CD4-positive, alpha-beta memory T cell (primary cell): ENCODE measurements at regions of chr14 and their contacts with region 1.

Region 1: GRCh38 chr14:49971156-49972130 is 78.6 kb downstream of the ARF6 start:
- DNase-seq: peak; percentile 75 to 85 (median 82)
- H3K4me3 ChIP-seq: peak overlapping the region; percentile 36 to 44
- H3K4me3 Mint-ChIP-seq: peak overlapping the region; percentile 77 to 89 (median 82)
- H3K27ac ChIP-seq: peak overlapping the region; percentile 73
- H3K27ac Mint-ChIP-seq: peak overlapping the region; percentile 87 to 98 (median 96)
- H3K4me1 ChIP-seq: peaks cover 69% of the 10 kb centered on the region
- H3K4me1 Mint-ChIP-seq: peaks cover 44 to 76% (median 62%) of the 10 kb centered on the region in 4 donors
- H3K27me3 ChIP-seq: no peaks in the 10 kb centered on the region
- H3K27me3 Mint-ChIP-seq: no peaks in the 10 kb centered on the region

Region 2: GRCh38 chr14:49339130-49339529 is 632.3 kb before region 1 on chr14:
- CTCF ChIA-PET with region 1: no interaction called
- POLR2A ChIA-PET with region 1: no interaction called
- intact Hi-C with region 1: no loop called
- DNase-seq: no peak
- H3K4me3 ChIP-seq: no peak overlapping the region
- H3K4me3 Mint-ChIP-seq: no peak overlapping the region
- H3K27ac ChIP-seq: no peak overlapping the region
- H3K27ac Mint-ChIP-seq: peak overlapping the region in 1 of 7 donors; percentile 58
- H3K4me1 ChIP-seq: no peaks in the 10 kb centered on the region
- H3K4me1 Mint-ChIP-seq: no peaks in the 10 kb centered on the region
- H3K27me3 ChIP-seq: no peaks in the 10 kb centered on the region
- H3K27me3 Mint-ChIP-seq: peaks cover 8 to 12% of the 10 kb centered on the region in 2 donors

Region 3: GRCh38 chr14:49867831-49868723 is 103.4 kb before region 1 on chr14:
- CTCF ChIA-PET with region 1: interaction called, 72 read pairs
- POLR2A ChIA-PET with region 1: interaction called, 81 read pairs
- intact Hi-C with region 1: loop called (anchors 1 kb)
- DNase-seq: peak; percentile 92 to 98 (median 96)
- H3K4me3 ChIP-seq: peak overlapping the region; percentile 47 to 54
- H3K4me3 Mint-ChIP-seq: peak overlapping the region; percentile 88 to 96 (median 92)
- H3K27ac ChIP-seq: peak overlapping the region; percentile 92
- H3K27ac Mint-ChIP-seq: peak overlapping the region; percentile 88 to 99 (median 98)
- H3K4me1 ChIP-seq: peaks cover 45% of the 10 kb centered on the region
- H3K4me1 Mint-ChIP-seq: peaks cover 12 to 21% (median 14%) of the 10 kb centered on the region in 4 donors
- H3K27me3 ChIP-seq: no peaks in the 10 kb centered on the region
- H3K27me3 Mint-ChIP-seq: no peaks in the 10 kb centered on the region

Region 4: GRCh38 chr14:49897968-49898367 is 73.5 kb before region 1 on chr14:
- CTCF ChIA-PET with region 1: interaction called, 8 read pairs
- POLR2A ChIA-PET with region 1: interaction called, 84 read pairs
- intact Hi-C with region 1: loop called (anchors 1 kb)
- DNase-seq: no peak
- H3K4me3 ChIP-seq: peak overlapping the region; percentile 33 to 58
- H3K4me3 Mint-ChIP-seq: peak overlapping the region; percentile 65 to 99 (median 84)
- H3K27ac ChIP-seq: peak overlapping the region; percentile 98
- H3K27ac Mint-ChIP-seq: peak overlapping the region; percentile 85 to 97 (median 94)
- H3K4me1 ChIP-seq: peaks cover 42% of the 10 kb centered on the region
- H3K4me1 Mint-ChIP-seq: peaks cover 21 to 62% (median 36%) of the 10 kb centered on the region in 4 donors
- H3K27me3 ChIP-seq: no peaks in the 10 kb centered on the region
- H3K27me3 Mint-ChIP-seq: no peaks in the 10 kb centered on the region

Region 5: GRCh38 chr14:49946320-49947141 is 24.9 kb before region 1 on chr14:
- CTCF ChIA-PET with region 1: interaction called, 44 read pairs
- POLR2A ChIA-PET with region 1: interaction called, 195 read pairs
- intact Hi-C with region 1: loop called (anchors 1 kb)
- DNase-seq: peak; percentile 40 to 67 (median 41)
- H3K4me3 ChIP-seq: peak overlapping the region in 1 of 2 donors; percentile 11
- H3K4me3 Mint-ChIP-seq: peak overlapping the region; percentile 1 to 78 (median 67)
- H3K27ac ChIP-seq: peak overlapping the region; percentile 64
- H3K27ac Mint-ChIP-seq: peak overlapping the region; percentile 90 to 97 (median 94)
- H3K4me1 ChIP-seq: peaks cover 69% of the 10 kb centered on the region
- H3K4me1 Mint-ChIP-seq: peaks cover 59 to 91% (median 72%) of the 10 kb centered on the region in 4 donors
- H3K27me3 ChIP-seq: no peaks in the 10 kb centered on the region
- H3K27me3 Mint-ChIP-seq: no peaks in the 10 kb centered on the region

Region 6: GRCh38 chr14:49982501-49982951 is 11.1 kb after region 1 on chr14:
- CTCF ChIA-PET with region 1: interaction called, 5 read pairs
- POLR2A ChIA-PET with region 1: interaction called, 64 read pairs
- intact Hi-C with region 1: loop called (anchors 1 kb)
- DNase-seq: peak; percentile 48 to 77 (median 64)
- H3K4me3 ChIP-seq: no peak overlapping the region
- H3K4me3 Mint-ChIP-seq: peak overlapping the region; percentile 71 to 89 (median 79)
- H3K27ac ChIP-seq: peak overlapping the region; percentile 64
- H3K27ac Mint-ChIP-seq: peak overlapping the region; percentile 89 to 98 (median 95)
- H3K4me1 ChIP-seq: peaks cover 92% of the 10 kb centered on the region
- H3K4me1 Mint-ChIP-seq: peaks cover 51 to 83% (median 70%) of the 10 kb centered on the region in 4 donors
- H3K27me3 ChIP-seq: no peaks in the 10 kb centered on the region
- H3K27me3 Mint-ChIP-seq: no peaks in the 10 kb centered on the region

Region 7: DNA sequence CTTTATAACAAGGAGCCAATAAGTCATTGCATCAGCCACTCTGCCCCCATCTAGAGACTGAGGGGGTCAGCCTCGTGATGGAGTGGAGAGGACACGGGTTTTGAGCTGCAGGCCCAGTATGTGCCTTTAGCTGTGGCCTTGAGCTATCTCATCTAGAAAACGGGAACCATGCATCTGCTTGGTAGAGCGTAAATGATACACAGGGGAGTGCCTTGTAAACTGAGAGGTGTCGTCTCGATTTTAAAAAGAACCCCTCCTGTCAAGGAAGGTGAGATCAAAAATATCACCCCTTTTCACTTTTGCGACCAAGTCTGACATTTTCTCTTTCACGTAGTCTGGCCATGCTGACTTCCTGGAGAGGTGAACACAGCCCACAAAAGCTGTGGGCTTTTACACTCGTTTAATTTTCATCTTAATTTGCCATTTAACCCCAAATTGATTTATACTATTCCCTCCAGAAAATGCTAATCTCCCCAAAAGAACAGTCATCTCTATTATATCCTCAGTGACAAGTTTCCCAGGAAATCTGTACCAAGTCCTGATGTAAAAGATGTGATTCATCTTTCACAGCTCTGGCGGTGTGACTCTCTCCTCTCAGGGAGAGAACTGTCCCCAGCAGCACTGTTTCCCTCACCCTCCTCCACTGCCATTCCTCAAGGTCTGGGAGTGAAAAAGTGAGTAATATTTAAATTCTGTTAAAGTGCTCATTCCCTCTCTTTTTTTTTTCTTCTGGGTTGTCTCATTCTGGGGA is 114.3 kb after region 1 on chr14:
- CTCF ChIA-PET with region 1: interaction called, 6 read pairs
- POLR2A ChIA-PET with region 1: interaction called, 35 read pairs
- intact Hi-C with region 1: no loop called
- DNase-seq: peak; percentile 21 to 48 (median 28)
- H3K4me3 ChIP-seq: no peak overlapping the region
- H3K4me3 Mint-ChIP-seq: peak overlapping the region; percentile 23 to 78 (median 71)
- H3K27ac ChIP-seq: peak overlapping the region; percentile 99
- H3K27ac Mint-ChIP-seq: peak overlapping the region; percentile 83 to 99 (median 95)
- H3K4me1 ChIP-seq: peaks cover 88% of the 10 kb centered on the region
- H3K4me1 Mint-ChIP-seq: peaks cover 58 to 89% (median 76%) of the 10 kb centered on the region in 4 donors
- H3K27me3 ChIP-seq: no peaks in the 10 kb centered on the region
- H3K27me3 Mint-ChIP-seq: no peaks in the 10 kb centered on the region

Region 8: GRCh38 chr14:50139192-50139591 is 167.7 kb after region 1 on chr14:
- CTCF ChIA-PET with region 1: no interaction called
- POLR2A ChIA-PET with region 1: no interaction called
- intact Hi-C with region 1: no loop called
- DNase-seq: no peak
- H3K4me3 ChIP-seq: no peak overlapping the region
- H3K4me3 Mint-ChIP-seq: no peak overlapping the region
- H3K27ac ChIP-seq: no peak overlapping the region
- H3K27ac Mint-ChIP-seq: no peak overlapping the region
- H3K4me1 ChIP-seq: no peaks in the 10 kb centered on the region
- H3K4me1 Mint-ChIP-seq: no peaks in the 10 kb centered on the region
- H3K27me3 ChIP-seq: no peaks in the 10 kb centered on the region
- H3K27me3 Mint-ChIP-seq: no peaks in the 10 kb centered on the region

Region 9: GRCh38 chr14:50171895-50172294 is 200.5 kb after region 1 on chr14:
- CTCF ChIA-PET with region 1: no interaction called
- POLR2A ChIA-PET with region 1: no interaction called
- intact Hi-C with region 1: no loop called
- DNase-seq: no peak
- H3K4me3 ChIP-seq: no peak overlapping the region
- H3K4me3 Mint-ChIP-seq: no peak overlapping the region
- H3K27ac ChIP-seq: no peak overlapping the region
- H3K27ac Mint-ChIP-seq: no peak overlapping the region
- H3K4me1 ChIP-seq: no peaks in the 10 kb centered on the region
- H3K4me1 Mint-ChIP-seq: no peaks in the 10 kb centered on the region
- H3K27me3 ChIP-seq: no peaks in the 10 kb centered on the region
- H3K27me3 Mint-ChIP-seq: no peaks in the 10 kb centered on the region